ENCODE measurements at regions of chr21 and their contacts with region 1.

Region 1: DNA sequence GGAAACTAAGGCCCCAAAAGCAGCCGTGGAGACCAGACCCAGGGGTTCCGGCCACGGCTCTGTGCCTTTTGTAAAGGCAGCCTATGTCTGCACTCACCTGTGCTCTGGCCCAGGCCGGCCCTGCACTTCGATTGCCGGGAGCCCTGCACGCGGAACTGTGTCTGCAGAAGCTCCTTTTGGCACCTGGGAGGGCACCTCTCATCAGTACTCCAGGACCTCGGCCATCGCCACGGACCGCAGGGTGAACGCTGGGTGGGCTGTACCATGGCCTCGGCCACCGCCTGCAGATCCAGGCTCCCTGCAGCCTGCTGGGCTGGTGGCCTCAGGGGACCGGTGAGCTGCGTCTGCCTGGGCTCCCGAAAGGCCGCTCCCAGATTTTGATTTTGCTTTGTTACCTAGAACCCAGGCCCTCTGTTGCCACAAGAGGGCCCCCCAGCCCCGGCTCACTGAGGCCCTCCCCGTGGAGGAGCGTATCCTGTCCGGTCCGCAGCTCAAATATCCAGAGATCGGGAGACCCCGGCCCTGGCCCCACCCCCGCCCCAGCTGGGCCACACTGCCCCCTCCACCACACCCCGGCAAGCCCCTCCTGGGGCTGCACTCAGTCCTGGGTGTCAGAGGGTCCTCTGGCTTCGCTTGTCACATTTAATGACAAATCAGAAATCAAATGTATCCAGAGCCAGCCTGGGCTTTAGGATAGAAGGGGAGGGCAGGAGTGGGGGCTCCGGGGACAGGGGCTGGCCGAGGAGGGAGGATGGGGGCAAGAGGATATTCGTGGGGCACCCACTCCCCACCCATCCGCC is 60.2 kb upstream of the PDE9A start:
- DNase-seq: peak; percentile 84
- ATAC-seq: peak; percentile 96
- H3K4me3 Mint-ChIP-seq: no peak overlapping the region
- H3K27ac Mint-ChIP-seq: no peak overlapping the region
- H3K4me1 Mint-ChIP-seq: peaks cover 14% of the 10 kb centered on the region
- H3K27me3 Mint-ChIP-seq: peaks cover 21% of the 10 kb centered on the region
- CTCF ChIP-seq: peak; percentile 61

Region 2: GRCh38 chr21:42062236-42063022 is 530.8 kb before region 1 on chr21:
- CTCF ChIA-PET with region 1: no interaction called
- POLR2A ChIA-PET with region 1: no interaction called
- DNase-seq: no peak
- ATAC-seq: peak; percentile 45; the same call in 1 of the 2 replicates
- H3K4me3 Mint-ChIP-seq: no peak overlapping the region
- H3K27ac Mint-ChIP-seq: no peak overlapping the region
- H3K4me1 Mint-ChIP-seq: peaks cover 34% of the 10 kb centered on the region
- H3K27me3 Mint-ChIP-seq: no peaks in the 10 kb centered on the region
- CTCF ChIP-seq: no peak

Region 3: GRCh38 chr21:42554286-42554961 is 38.8 kb before region 1 on chr21:
- CTCF ChIA-PET with region 1: interaction called, 10 read pairs
- POLR2A ChIA-PET with region 1: no interaction called
- DNase-seq: peak; percentile 32
- ATAC-seq: peak; percentile 74
- H3K4me3 Mint-ChIP-seq: no peak overlapping the region
- H3K27ac Mint-ChIP-seq: peak overlapping the region; percentile 76
- H3K4me1 Mint-ChIP-seq: peaks cover 35% of the 10 kb centered on the region
- H3K27me3 Mint-ChIP-seq: no peaks in the 10 kb centered on the region
- CTCF ChIP-seq: no peak

Region 4: DNA sequence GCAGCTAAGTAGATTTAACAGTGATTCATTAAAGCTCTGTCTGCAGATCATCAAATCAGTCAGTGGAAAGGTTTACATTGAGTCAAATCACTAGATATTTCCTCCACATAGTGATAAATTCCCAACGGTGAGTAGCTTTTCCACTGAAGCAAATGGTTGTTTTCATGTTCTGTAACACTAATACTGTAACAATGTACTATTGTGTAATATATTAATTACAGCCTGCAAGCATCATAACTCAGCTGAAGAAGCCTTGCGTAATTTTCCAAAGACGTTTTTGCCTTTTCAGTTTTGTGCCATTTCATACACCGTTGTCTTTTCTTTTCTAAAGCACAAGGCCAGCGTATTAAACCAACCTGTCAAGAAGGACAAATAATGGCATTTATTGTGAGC is 43.3 kb after region 1 on chr21:
- CTCF ChIA-PET with region 1: interaction called, 17 read pairs
- POLR2A ChIA-PET with region 1: no interaction called
- DNase-seq: no peak
- ATAC-seq: no peak
- H3K4me3 Mint-ChIP-seq: no peak overlapping the region
- H3K27ac Mint-ChIP-seq: no peak overlapping the region
- H3K4me1 Mint-ChIP-seq: peaks cover 18% of the 10 kb centered on the region
- H3K27me3 Mint-ChIP-seq: no peaks in the 10 kb centered on the region
- CTCF ChIP-seq: no peak

Region 5: GRCh38 chr21:42666023-42666747 is 73.0 kb after region 1 on chr21:
- CTCF ChIA-PET with region 1: interaction called, 20 read pairs
- POLR2A ChIA-PET with region 1: interaction called, 3 read pairs
- DNase-seq: peak; percentile 53
- ATAC-seq: peak; percentile 61
- H3K4me3 Mint-ChIP-seq: no peak overlapping the region
- H3K27ac Mint-ChIP-seq: 0 out of 2 replicates have a peak overlapping the region, but pooled peaks have one; percentile 82
- H3K4me1 Mint-ChIP-seq: peaks cover 39% of the 10 kb centered on the region
- H3K27me3 Mint-ChIP-seq: no peaks in the 10 kb centered on the region
- CTCF ChIP-seq: no peak

Region 6: DNA sequence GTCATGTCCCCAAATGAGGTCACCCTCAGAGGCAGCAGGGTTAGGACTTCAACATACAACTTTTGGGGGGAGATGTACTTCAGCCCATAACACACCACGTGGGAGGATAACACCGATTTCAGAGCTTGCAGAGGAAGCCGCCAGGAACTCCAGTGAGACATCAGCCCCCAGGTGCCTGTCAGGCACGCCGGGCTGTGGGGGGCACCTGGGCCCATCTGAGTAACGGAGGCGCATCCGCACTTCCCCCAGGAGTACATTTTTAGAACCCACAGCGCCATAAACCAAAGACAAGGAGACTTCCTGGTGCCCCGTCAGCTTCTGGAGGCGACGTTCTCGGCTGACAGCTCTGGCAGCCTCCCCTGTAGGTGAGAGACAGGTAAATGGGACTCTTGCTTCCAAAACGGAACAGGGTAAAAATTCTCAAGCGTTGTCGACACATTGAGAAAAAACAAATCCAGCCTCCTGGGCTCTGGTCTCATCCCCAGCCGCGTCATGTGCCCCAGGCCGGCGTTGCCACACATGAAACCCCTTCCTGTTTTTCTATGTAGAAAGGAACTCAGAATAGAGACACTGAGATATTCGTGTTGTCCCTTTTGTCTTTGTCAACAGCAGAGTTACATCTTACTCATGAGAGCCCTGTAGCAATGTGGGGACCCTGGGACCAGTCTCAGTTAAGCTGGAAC is 153.5 kb after region 1 on chr21:
- CTCF ChIA-PET with region 1: interaction called, 13 read pairs
- POLR2A ChIA-PET with region 1: no interaction called
- DNase-seq: no peak
- ATAC-seq: no peak
- H3K4me3 Mint-ChIP-seq: no peak overlapping the region
- H3K27ac Mint-ChIP-seq: peak overlapping the region; percentile 36
- H3K4me1 Mint-ChIP-seq: peaks cover 8% of the 10 kb centered on the region
- H3K27me3 Mint-ChIP-seq: no peaks in the 10 kb centered on the region
- CTCF ChIP-seq: no peak

Region 7: DNA sequence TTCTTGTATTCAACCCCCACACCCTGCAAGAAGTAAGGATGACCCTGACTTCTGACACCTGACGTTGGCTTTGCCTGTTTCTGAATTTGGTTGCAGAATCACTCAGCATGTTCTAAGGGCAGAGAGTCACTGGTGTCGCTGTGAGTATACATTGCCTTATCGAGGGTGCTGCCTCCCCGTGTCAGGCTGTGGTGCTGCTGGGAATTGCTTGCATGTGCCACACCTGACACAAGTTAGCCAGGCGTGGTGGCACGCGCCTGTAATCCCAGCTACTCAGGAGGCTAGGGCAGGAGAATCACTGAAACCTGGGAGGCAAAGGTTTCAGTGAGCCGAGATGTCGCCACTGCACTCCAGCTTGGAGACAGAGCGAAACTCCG is 240.2 kb after region 1 on chr21:
- CTCF ChIA-PET with region 1: interaction called, 10 read pairs
- POLR2A ChIA-PET with region 1: no interaction called
- DNase-seq: peak; percentile 25
- ATAC-seq: peak; percentile 28
- H3K4me3 Mint-ChIP-seq: no peak overlapping the region
- H3K27ac Mint-ChIP-seq: 0 out of 2 replicates have a peak overlapping the region, but pooled peaks have one; percentile 48
- H3K4me1 Mint-ChIP-seq: peaks cover 16% of the 10 kb centered on the region
- H3K27me3 Mint-ChIP-seq: peaks cover 55% of the 10 kb centered on the region
- CTCF ChIP-seq: no peak